K562 (cell line): ENCODE measurements at regions of chr5 and their contacts with region 1.

Region 1: GRCh38 chr5:127492854-127493738 is 24.3 kb upstream of the PRRC1 start:
- DNase-seq: peak; percentile 38 to 45 (median 43)
- ATAC-seq: peak; percentile 78
- H3K4me3 ChIP-seq: no peak overlapping the region
- H3K27ac ChIP-seq: no peak overlapping the region
- H3K4me1 ChIP-seq: no peaks in the 10 kb centered on the region; a peak in 1 of 5 replicates
- H3K27me3 ChIP-seq: no peaks in the 10 kb centered on the region
- CTCF ChIP-seq: peak; percentile 79 to 89 (median 80)
- EP300 ChIP-seq: no peak
- POLR2A ChIP-seq: no peak
- RAD21 ChIP-seq: peak; percentile 65 to 67

Region 2: GRCh38 chr5:126837906-126838539 is 655.1 kb before region 1 on chr5:
- CTCF ChIA-PET with region 1: interaction called, 14 read pairs
- POLR2A ChIA-PET with region 1: no interaction called
- in situ Hi-C with region 1: no loop called
- intact Hi-C with region 1: no loop called
- DNase-seq: peak in 1 of 4 experiments; percentile 12
- ATAC-seq: peak; percentile 54
- H3K4me3 ChIP-seq: no peak overlapping the region
- H3K27ac ChIP-seq: no peak overlapping the region
- H3K4me1 ChIP-seq: no peaks in the 10 kb centered on the region; a peak in 1 of 5 replicates
- H3K27me3 ChIP-seq: no peaks in the 10 kb centered on the region
- CTCF ChIP-seq: peak in 2 of 3 experiments; percentile 32 to 47; a peak in 3 of 6 replicates
- EP300 ChIP-seq: no peak
- POLR2A ChIP-seq: no peak
- RAD21 ChIP-seq: peak; percentile 41 to 68; a peak in 3 of 4 replicates

Region 3: GRCh38 chr5:127290019-127290945 is 202.8 kb before region 1 on chr5 and contains the start of gene MEGF10:
- CTCF ChIA-PET with region 1: interaction called, 20 read pairs
- POLR2A ChIA-PET with region 1: no interaction called
- in situ Hi-C with region 1: no loop called
- intact Hi-C with region 1: loop called (anchors 5 kb)
- DNase-seq: peak; percentile 14 to 54 (median 18)
- ATAC-seq: peak; percentile 88
- H3K4me3 ChIP-seq: no peak within 1 kb of the TSS
- H3K27ac ChIP-seq: no peak within 1 kb of the TSS
- H3K4me1 ChIP-seq: peaks cover 0 to 4% of the 10 kb centered on the region in 2 experiments; a peak in 1 of 5 replicates
- H3K27me3 ChIP-seq: peaks cover 0 to 14% of the 10 kb centered on the region in 2 experiments; a peak in 2 of 5 replicates
- CTCF ChIP-seq: peak; percentile 55 to 65 (median 61)
- EP300 ChIP-seq: no peak
- POLR2A ChIP-seq: no peak
- RAD21 ChIP-seq: peak; percentile 42 to 64
- polyA plus RNA-seq, gene MEGF10: not detected

Region 4: GRCh38 chr5:127529904-127530682 is 37.0 kb after region 1 on chr5:
- CTCF ChIA-PET with region 1: no interaction called
- POLR2A ChIA-PET with region 1: no interaction called
- in situ Hi-C with region 1: no loop called
- intact Hi-C with region 1: no loop called
- DNase-seq: no peak
- ATAC-seq: no peak
- H3K4me3 ChIP-seq: no peak overlapping the region
- H3K27ac ChIP-seq: no peak overlapping the region
- H3K4me1 ChIP-seq: no peaks in the 10 kb centered on the region
- H3K27me3 ChIP-seq: no peaks in the 10 kb centered on the region
- CTCF ChIP-seq: no peak
- EP300 ChIP-seq: no peak
- POLR2A ChIP-seq: no peak
- RAD21 ChIP-seq: no peak

Region 5: DNA sequence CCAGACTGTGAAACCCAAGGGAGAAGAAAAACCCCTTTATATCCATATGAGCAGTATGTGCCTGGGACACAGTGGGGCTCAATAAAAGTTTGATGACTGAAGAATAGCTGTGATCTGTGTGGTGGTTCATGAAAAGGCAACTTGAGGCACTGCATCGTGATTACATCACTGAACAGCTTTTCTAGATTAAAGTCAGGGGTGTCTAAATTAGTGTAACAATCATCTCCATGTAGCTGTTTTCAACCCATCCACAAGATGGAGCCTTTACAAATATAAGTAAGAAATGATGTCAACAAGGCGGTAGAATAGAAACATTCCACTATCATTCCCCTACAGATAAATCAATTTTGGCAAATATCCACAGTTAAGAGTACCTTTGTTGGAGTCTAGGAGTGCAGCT is 79.8 kb after region 1 on chr5:
- CTCF ChIA-PET with region 1: no interaction called
- POLR2A ChIA-PET with region 1: no interaction called
- in situ Hi-C with region 1: no loop called
- intact Hi-C with region 1: no loop called
- DNase-seq: peak in 1 of 4 experiments; percentile 0
- ATAC-seq: no peak
- H3K4me3 ChIP-seq: no peak overlapping the region
- H3K27ac ChIP-seq: no peak overlapping the region
- H3K4me1 ChIP-seq: peaks cover 0 to 3% of the 10 kb centered on the region in 2 experiments; a peak in 1 of 5 replicates
- H3K27me3 ChIP-seq: peaks cover 0 to 5% of the 10 kb centered on the region in 2 experiments; a peak in 1 of 5 replicates
- CTCF ChIP-seq: 0 out of 6 replicates have a peak, but pooled peaks of 1 of the 3 experiments have one; percentile 13
- EP300 ChIP-seq: no peak
- POLR2A ChIP-seq: no peak
- RAD21 ChIP-seq: no peak